Mucosa of descending colon (tissue), 3 donors: ENCODE measurements at regions of chr3 and their contacts with region 1.

Region 1: DNA sequence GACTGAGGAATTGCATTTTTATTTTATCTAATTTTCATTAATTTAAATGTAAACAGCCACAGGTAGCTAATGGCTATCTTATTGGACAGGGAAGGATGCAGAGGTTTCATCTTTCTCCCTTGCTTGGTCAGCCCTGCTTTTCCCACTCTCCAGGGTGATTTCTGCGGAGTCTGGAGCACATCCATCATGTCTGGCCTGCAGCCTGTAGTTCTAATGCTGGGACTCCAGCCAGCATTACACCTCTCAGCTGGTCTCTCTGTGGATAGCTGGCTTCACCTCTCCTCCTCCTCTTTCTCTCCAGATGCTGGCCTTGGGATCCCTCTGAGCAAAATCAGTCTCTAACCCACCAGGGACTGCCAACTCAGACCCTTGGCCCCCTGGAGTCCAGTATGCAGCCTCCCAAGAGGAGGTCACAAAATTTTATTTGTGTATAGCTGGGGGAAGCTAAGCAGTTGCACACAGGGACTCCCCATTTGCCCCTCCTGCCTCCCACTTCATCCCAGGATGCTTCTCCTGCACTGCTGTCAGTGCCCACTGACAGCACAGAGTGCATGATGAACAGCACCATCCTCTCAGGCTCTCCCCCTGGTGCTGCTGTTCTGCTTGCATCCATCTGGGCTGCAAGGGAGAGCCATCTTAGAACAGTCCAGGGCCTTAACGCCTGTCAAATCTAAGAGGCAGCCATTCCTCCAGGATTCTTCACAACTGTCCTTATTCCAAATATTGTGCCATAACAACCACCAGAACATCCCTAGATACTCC is 1.7 kb downstream of the BFSP2 start:
- DNase-seq: no peak
- ATAC-seq: no peak
- H3K4me3 ChIP-seq: no peak overlapping the region
- H3K4me1 ChIP-seq: no peaks in the 10 kb centered on the region
- CTCF ChIP-seq: no peak

Region 2: GRCh38 chr3:133256787-133257483 is 144.6 kb before region 1 on chr3:
- intact Hi-C with region 1: loop called in 1 of 2 experiments (anchors 5 kb)
- DNase-seq: no peak
- ATAC-seq: no peak
- H3K4me3 ChIP-seq: no peak overlapping the region
- H3K4me1 ChIP-seq: no peaks in the 10 kb centered on the region
- CTCF ChIP-seq: no peak